ENCODE measurements at regions of chr6 and their contacts with region 1.

Region 1: GRCh38 chr6:32952817-32953739 is at the start of gene HLA-DMA:
- DNase-seq: peak; percentile 81
- ATAC-seq: peak; percentile 97
- H3K4me3 Mint-ChIP-seq: peak within 1 kb of the TSS; percentile 68
- H3K27ac Mint-ChIP-seq: peak within 1 kb of the TSS; percentile 76
- H3K4me1 Mint-ChIP-seq: peaks cover 56% of the 10 kb centered on the region
- H3K27me3 Mint-ChIP-seq: no peaks in the 10 kb centered on the region
- total RNA-seq, gene HLA-DMA: 11.8 TPM

Region 2: GRCh38 chr6:32853541-32854375 is 99.3 kb before region 1 on chr6 and contains the starts of genes PSMB9 and TAP1:
- CTCF ChIA-PET with region 1: interaction called, 11 read pairs
- POLR2A ChIA-PET with region 1: no interaction called
- intact Hi-C with region 1: no loop called
- DNase-seq: peak; percentile 98
- ATAC-seq: peak; percentile 84
- H3K4me3 Mint-ChIP-seq: peak within 1 kb of the TSS; percentile 100
- H3K27ac Mint-ChIP-seq: peak within 1 kb of the TSS; percentile 99
- H3K4me1 Mint-ChIP-seq: peaks cover 62% of the 10 kb centered on the region
- H3K27me3 Mint-ChIP-seq: no peaks in the 10 kb centered on the region
- total RNA-seq, gene PSMB9: 210 to 282 TPM
- total RNA-seq, gene TAP1: 191 to 255 TPM

Region 3: GRCh38 chr6:32885698-32886286 is 67.3 kb before region 1 on chr6:
- CTCF ChIA-PET with region 1: interaction called, 18 read pairs
- POLR2A ChIA-PET with region 1: no interaction called
- intact Hi-C with region 1: loop called (anchors 1 to 2 kb)
- DNase-seq: no peak
- ATAC-seq: peak; percentile 55
- H3K4me3 Mint-ChIP-seq: no peak overlapping the region
- H3K27ac Mint-ChIP-seq: no peak overlapping the region
- H3K4me1 Mint-ChIP-seq: peaks cover 10% of the 10 kb centered on the region
- H3K27me3 Mint-ChIP-seq: no peaks in the 10 kb centered on the region

Region 4: DNA sequence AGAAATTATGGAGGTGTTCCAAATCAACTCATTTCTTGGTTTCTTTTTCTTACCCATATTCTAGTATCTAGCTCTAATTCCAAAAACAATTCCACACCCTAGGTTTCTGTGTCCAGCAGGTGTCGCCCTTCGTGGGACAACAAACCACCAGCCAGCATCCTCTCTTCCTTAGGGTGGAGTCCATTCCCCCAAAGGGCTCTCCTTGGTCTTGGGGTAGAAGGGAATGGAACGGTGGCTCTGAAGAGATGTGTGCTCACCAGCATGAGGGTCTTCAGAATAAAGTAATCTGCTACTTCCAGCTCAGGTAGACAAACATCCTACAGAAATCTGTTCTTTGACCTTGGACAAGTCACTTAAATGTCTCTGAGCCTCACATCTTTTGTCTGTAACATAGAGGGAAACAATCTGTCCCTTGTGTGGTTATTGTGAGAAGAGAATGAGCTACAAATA is 19.4 kb before region 1 on chr6:
- CTCF ChIA-PET with region 1: interaction called, 137 read pairs
- POLR2A ChIA-PET with region 1: no interaction called
- intact Hi-C with region 1: loop called in 1 of 2 experiments (anchors 1 kb)
- DNase-seq: peak; percentile 85
- ATAC-seq: peak; percentile 69
- H3K4me3 Mint-ChIP-seq: no peak overlapping the region
- H3K27ac Mint-ChIP-seq: no peak overlapping the region
- H3K4me1 Mint-ChIP-seq: peaks cover 5% of the 10 kb centered on the region
- H3K27me3 Mint-ChIP-seq: no peaks in the 10 kb centered on the region

Region 5: DNA sequence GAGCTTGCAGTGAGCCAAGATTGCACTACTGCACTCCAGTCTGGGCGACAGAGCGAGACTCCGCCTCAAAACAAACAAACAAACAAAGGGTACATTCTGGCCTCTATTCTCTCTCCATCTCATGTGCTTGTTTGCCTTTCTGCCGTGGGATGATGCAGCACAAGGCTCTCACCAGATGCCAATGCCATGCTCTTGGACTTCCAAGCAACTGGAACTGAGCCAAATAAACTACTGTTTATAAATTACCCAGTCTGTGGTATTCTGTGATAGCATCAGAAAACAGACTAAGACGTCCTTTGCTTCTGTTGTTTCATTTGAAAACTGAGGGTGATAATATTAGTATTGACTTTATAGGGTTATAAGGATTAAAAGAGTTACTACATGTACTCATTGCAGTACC is 11.7 kb after region 1 on chr6:
- CTCF ChIA-PET with region 1: interaction called, 197 read pairs
- POLR2A ChIA-PET with region 1: interaction called, 3 read pairs
- intact Hi-C with region 1: loop called (anchors 1 to 2 kb)
- DNase-seq: no peak
- ATAC-seq: no peak
- H3K4me3 Mint-ChIP-seq: no peak overlapping the region
- H3K27ac Mint-ChIP-seq: peak overlapping the region; percentile 44
- H3K4me1 Mint-ChIP-seq: peaks cover 49% of the 10 kb centered on the region
- H3K27me3 Mint-ChIP-seq: no peaks in the 10 kb centered on the region